ENCODE measurements at regions of chr4 and their contacts with region 1.

Region 1: GRCh38 chr4:184538023-184538599 is 63.8 kb upstream of the IRF2 start:
- DNase-seq: peak; percentile 62 to 83
- ATAC-seq: peak; percentile 73 to 87 (median 79)
- H3K4me3 ChIP-seq: peak overlapping the region; percentile 70
- H3K4me3 Mint-ChIP-seq: peak overlapping the region; percentile 98
- H3K27ac ChIP-seq: peak overlapping the region; percentile 95
- H3K27ac Mint-ChIP-seq: peak overlapping the region; percentile 99 to 100
- H3K4me1 ChIP-seq: peaks cover 21% of the 10 kb centered on the region
- H3K4me1 Mint-ChIP-seq: peaks cover 45% of the 10 kb centered on the region in 2 donors
- H3K27me3 ChIP-seq: no peaks in the 10 kb centered on the region
- H3K27me3 Mint-ChIP-seq: no peaks in the 10 kb centered on the region
- CTCF ChIP-seq: peak; percentile 74

Region 2: DNA sequence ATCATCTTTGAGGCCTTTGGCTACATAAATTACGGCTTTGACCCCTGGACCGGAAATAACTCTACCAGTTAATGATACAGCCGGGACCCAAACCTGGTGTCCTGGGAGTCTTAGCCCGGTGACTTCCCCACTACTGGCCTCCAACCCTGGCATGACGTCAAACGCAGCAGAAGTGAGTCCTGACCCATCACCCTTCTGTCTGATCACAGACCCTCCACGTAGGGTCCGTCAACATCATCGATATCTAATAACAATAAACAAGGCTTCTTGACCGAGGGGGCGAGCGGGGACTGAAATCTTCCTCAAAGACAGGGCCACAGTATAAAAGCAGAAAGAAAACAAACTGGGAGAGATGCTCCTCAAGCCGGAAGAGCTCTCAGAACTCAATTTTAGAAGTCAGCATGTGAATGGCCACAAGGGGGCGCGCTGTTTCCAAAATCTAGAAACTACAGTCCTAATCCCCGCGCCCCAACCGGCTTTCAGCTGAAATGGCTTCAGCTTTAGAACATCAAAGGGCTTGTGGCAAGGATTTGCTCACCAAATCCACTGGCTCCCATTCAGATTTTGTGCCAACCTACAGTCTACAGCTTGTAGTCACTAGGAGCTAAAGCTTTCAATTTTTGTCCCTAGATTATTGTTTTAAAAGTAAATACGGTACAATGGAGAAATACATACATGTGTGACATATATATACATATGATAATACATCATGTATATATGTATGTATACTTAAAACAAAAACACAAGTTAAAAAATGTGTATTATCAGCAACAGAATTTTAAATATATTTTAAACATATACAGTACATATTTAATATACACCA is 274.0 kb before region 1 on chr4:
- intact Hi-C with region 1: loop called (anchors 1 kb)
- DNase-seq: peak; percentile 91 to 96
- ATAC-seq: peak; percentile 73 to 89 (median 77)
- H3K4me3 ChIP-seq: no peak overlapping the region
- H3K4me3 Mint-ChIP-seq: no peak overlapping the region
- H3K27ac ChIP-seq: no peak overlapping the region
- H3K27ac Mint-ChIP-seq: peak overlapping the region; percentile 22 to 78
- H3K4me1 ChIP-seq: peaks cover 15% of the 10 kb centered on the region
- H3K4me1 Mint-ChIP-seq: peaks cover 9 to 23% of the 10 kb centered on the region in 2 donors
- H3K27me3 ChIP-seq: no peaks in the 10 kb centered on the region
- H3K27me3 Mint-ChIP-seq: no peaks in the 10 kb centered on the region
- CTCF ChIP-seq: peak; percentile 76

Region 3: GRCh38 chr4:184343502-184344177 is 194.5 kb before region 1 on chr4:
- intact Hi-C with region 1: loop called (anchors 10 kb)
- DNase-seq: peak in 1 of 2 donors; percentile 61
- ATAC-seq: peak; percentile 50 to 65 (median 59)
- H3K4me3 ChIP-seq: peak overlapping the region; percentile 43
- H3K4me3 Mint-ChIP-seq: peak overlapping the region; percentile 89
- H3K27ac ChIP-seq: no peak overlapping the region
- H3K27ac Mint-ChIP-seq: peak overlapping the region; percentile 82 to 85
- H3K4me1 ChIP-seq: peaks cover 41% of the 10 kb centered on the region
- H3K4me1 Mint-ChIP-seq: peaks cover 52% of the 10 kb centered on the region in 2 donors
- H3K27me3 ChIP-seq: no peaks in the 10 kb centered on the region
- H3K27me3 Mint-ChIP-seq: no peaks in the 10 kb centered on the region
- CTCF ChIP-seq: no peak

Region 4: DNA sequence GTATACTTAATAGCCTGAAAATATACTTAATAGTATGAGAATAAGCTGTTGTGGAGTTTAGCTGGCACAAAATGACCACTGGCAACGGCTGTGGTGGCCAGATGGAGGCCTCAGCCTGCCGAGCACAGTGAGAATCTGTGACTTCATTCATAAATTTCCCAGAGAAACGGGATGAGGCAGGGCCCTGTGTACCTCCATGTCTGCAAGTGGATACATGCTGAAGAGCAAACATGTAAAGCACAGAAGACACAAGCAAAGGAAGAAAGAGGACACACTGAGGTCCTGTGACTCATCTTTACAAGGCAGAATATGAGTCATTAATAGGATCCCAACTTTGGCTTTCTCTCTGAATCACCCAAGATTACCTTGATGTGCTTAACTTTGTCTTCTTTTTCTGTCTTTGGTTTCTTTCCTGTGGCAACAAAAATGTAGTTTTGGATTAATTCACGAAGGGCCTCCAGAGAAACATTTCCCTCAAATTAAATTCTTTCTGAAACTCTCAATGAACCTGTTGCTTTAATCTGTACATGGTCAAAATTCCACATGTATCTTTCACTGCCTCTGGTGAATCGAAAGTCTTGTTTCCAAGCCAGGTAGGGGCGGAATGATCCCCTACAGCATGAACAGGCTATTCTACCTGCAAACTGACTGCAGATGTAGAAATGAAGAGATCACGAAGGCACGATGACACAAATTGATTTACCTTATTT is 120.2 kb before region 1 on chr4:
- intact Hi-C with region 1: loop called (anchors 1 kb)
- DNase-seq: peak in 1 of 2 donors; percentile 62
- ATAC-seq: peak; percentile 43 to 61 (median 60)
- H3K4me3 ChIP-seq: no peak overlapping the region
- H3K4me3 Mint-ChIP-seq: peak overlapping the region; percentile 43
- H3K27ac ChIP-seq: peak overlapping the region; percentile 80
- H3K27ac Mint-ChIP-seq: peak overlapping the region; percentile 87 to 92
- H3K4me1 ChIP-seq: peaks cover 22% of the 10 kb centered on the region
- H3K4me1 Mint-ChIP-seq: peaks cover 57 to 59% of the 10 kb centered on the region in 2 donors
- H3K27me3 ChIP-seq: no peaks in the 10 kb centered on the region
- H3K27me3 Mint-ChIP-seq: no peaks in the 10 kb centered on the region
- CTCF ChIP-seq: no peak

Region 5: GRCh38 chr4:184968784-184969201 is 430.7 kb after region 1 on chr4:
- intact Hi-C with region 1: loop called (anchors 10 kb)
- DNase-seq: no peak
- ATAC-seq: peak; percentile 9 to 24 (median 11)
- H3K4me3 ChIP-seq: no peak overlapping the region
- H3K4me3 Mint-ChIP-seq: no peak overlapping the region
- H3K27ac ChIP-seq: no peak overlapping the region
- H3K27ac Mint-ChIP-seq: peak overlapping the region in 1 of 2 donors; percentile 79
- H3K4me1 ChIP-seq: no peaks in the 10 kb centered on the region
- H3K4me1 Mint-ChIP-seq: peaks cover 7% of the 10 kb centered on the region in 2 donors
- H3K27me3 ChIP-seq: no peaks in the 10 kb centered on the region
- H3K27me3 Mint-ChIP-seq: peaks cover 7 to 9% of the 10 kb centered on the region in 2 donors
- CTCF ChIP-seq: no peak